Activated B cell treated with CpG ODN at 0.5 μM for 24 hours (primary cell): ENCODE measurements at regions of chr17 and their contacts with region 1.

Region 1: DNA sequence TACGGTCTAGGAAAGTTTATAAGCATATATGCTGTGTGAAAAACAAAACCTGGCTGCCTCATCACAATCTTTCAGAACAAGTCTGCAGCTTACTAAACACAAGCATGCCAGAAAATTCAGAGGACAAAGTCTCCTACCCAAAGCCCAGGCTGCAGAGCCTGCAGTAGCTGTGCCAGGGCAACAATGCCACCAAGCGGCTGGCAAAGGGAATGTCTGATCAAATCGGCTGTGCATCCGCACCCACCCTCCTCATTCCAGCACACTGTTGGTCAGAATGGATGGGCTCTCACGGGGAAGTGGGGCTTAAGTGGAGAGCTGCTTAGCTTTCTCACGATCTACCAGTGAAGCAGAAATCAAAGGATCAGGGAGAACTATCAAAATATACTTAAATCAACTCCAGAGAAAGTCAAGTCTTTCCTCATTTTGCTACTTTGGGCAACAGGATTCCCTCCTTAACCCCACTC is 73.5 kb downstream of the CYTH1 start:
- DNase-seq: no peak
- ATAC-seq: peak; percentile 55
- H3K4me3 Mint-ChIP-seq: peak overlapping the region; percentile 69
- H3K27ac Mint-ChIP-seq: peak overlapping the region; percentile 93
- H3K4me1 Mint-ChIP-seq: peaks cover 90% of the 10 kb centered on the region
- H3K27me3 Mint-ChIP-seq: no peaks in the 10 kb centered on the region
- CTCF ChIP-seq: no peak

Region 2: GRCh38 chr17:78497115-78497540 is 211.4 kb before region 1 on chr17:
- CTCF ChIA-PET with region 1: interaction called, 7 read pairs
- POLR2A ChIA-PET with region 1: interaction called, 4 read pairs
- intact Hi-C with region 1: loop called (anchors 1 kb)
- DNase-seq: peak; percentile 26
- ATAC-seq: peak; percentile 77
- H3K4me3 Mint-ChIP-seq: no peak overlapping the region
- H3K27ac Mint-ChIP-seq: no peak overlapping the region
- H3K4me1 Mint-ChIP-seq: no peaks in the 10 kb centered on the region
- H3K27me3 Mint-ChIP-seq: no peaks in the 10 kb centered on the region
- CTCF ChIP-seq: peak; percentile 19

Region 3: DNA sequence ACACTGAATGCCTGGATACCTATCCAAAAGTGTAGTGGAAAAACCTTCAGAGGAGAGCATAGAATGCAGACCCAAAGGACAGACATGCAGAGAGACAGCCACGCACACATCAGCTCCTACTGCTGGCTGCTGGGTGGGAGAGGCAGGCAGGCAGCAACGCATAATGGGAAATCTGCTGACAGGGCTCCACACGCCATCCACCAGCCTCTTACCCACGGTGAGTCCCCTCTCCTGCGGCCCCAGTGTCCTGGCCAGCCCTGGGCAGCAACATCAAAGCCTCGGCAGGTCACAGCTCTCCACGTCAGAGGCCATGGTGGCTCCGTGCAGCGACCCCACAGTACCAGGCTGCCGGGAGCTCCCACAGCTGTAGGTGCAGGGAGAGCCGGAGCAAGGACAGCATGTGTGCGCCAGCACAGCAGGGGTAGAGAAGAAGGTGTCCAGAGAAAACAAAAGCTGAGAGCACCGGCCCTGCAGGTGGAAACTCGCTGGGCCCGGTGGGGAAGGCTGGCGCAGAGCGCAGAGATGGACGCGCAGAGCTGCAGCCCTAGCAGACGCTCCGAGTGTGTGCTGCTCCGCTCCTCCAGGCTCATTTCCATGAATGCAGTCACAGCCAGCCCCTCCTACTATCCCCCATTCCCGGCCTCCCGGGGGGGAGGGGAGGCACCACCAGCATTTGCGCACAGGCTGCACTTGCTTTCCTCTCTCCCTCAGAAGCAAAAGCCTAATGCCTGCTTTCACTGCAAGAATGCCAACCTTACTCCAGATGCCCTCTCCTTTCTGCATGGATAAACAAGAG is 14.7 kb after region 1 on chr17:
- CTCF ChIA-PET with region 1: interaction called, 42 read pairs
- POLR2A ChIA-PET with region 1: interaction called, 75 read pairs
- intact Hi-C with region 1: loop called (anchors 1 kb)
- DNase-seq: no peak
- ATAC-seq: no peak
- H3K4me3 Mint-ChIP-seq: peak overlapping the region; percentile 77
- H3K27ac Mint-ChIP-seq: peak overlapping the region; percentile 91
- H3K4me1 Mint-ChIP-seq: peaks cover 99% of the 10 kb centered on the region
- H3K27me3 Mint-ChIP-seq: no peaks in the 10 kb centered on the region
- CTCF ChIP-seq: no peak

Region 4: DNA sequence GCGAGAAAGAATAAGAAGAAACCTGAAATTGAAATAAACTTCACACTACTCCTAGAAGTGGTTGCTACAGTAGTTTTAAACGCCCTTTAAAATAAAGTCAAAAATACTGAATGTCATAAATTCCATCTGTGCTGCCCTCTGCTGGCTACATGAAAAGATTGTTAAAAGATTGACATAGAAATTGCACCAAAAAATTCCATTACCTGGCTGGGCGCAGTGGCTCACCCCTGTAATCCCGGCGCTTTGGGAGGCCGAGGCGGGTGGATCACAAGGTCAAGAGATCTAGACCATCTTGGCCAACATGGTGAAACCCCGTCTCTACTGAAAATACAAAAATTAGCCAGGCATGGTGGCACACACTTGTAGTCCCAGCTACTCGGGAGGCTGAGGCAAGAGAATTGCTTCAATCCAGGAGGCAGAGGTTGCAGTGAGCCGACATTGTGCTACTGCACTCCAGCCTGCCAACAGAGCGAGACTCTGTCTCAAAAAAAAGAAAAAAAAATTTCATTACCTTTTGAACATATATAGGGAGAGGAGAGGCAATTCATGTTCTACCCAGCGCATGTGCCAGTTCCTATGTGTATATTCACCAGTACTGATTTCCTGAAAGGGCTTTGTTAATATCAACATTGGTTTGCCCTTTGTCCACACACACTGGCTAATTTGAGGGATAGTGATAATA is 37.0 kb after region 1 on chr17:
- CTCF ChIA-PET with region 1: interaction called, 15 read pairs
- POLR2A ChIA-PET with region 1: interaction called, 12 read pairs
- intact Hi-C with region 1: loop called (anchors 1 kb)
- DNase-seq: no peak
- ATAC-seq: no peak
- H3K4me3 Mint-ChIP-seq: peak overlapping the region; percentile 52
- H3K27ac Mint-ChIP-seq: peak overlapping the region; percentile 87
- H3K4me1 Mint-ChIP-seq: peaks cover 92% of the 10 kb centered on the region
- H3K27me3 Mint-ChIP-seq: no peaks in the 10 kb centered on the region
- CTCF ChIP-seq: peak; percentile 30

Region 5: GRCh38 chr17:78781948-78782916 is 73.7 kb after region 1 on chr17 and contains the start of gene CYTH1:
- CTCF ChIA-PET with region 1: interaction called, 3 read pairs
- POLR2A ChIA-PET with region 1: interaction called, 18 read pairs
- intact Hi-C with region 1: loop called (anchors 1 kb)
- DNase-seq: peak; percentile 98
- ATAC-seq: peak; percentile 80
- H3K4me3 Mint-ChIP-seq: peak within 1 kb of the TSS; percentile 92
- H3K27ac Mint-ChIP-seq: peak within 1 kb of the TSS; percentile 93
- H3K4me1 Mint-ChIP-seq: peaks cover 40% of the 10 kb centered on the region
- H3K27me3 Mint-ChIP-seq: no peaks in the 10 kb centered on the region
- CTCF ChIP-seq: no peak
- total RNA-seq, gene CYTH1: 368 and 391 TPM in 2 replicates

Region 6: GRCh38 chr17:78818932-78819331 is 110.4 kb after region 1 on chr17:
- CTCF ChIA-PET with region 1: no interaction called
- POLR2A ChIA-PET with region 1: no interaction called
- intact Hi-C with region 1: no loop called
- DNase-seq: no peak
- ATAC-seq: no peak
- H3K4me3 Mint-ChIP-seq: no peak overlapping the region
- H3K27ac Mint-ChIP-seq: peak overlapping the region; percentile 41
- H3K4me1 Mint-ChIP-seq: peaks cover 13% of the 10 kb centered on the region
- H3K27me3 Mint-ChIP-seq: no peaks in the 10 kb centered on the region
- CTCF ChIP-seq: no peak

Region 7: GRCh38 chr17:78840725-78841611 is 132.4 kb after region 1 on chr17 and contains the start of gene USP36:
- CTCF ChIA-PET with region 1: no interaction called
- POLR2A ChIA-PET with region 1: interaction called, 3 read pairs
- intact Hi-C with region 1: loop called (anchors 5 kb)
- DNase-seq: peak; percentile 99
- ATAC-seq: peak; percentile 85
- H3K4me3 Mint-ChIP-seq: peak within 1 kb of the TSS; percentile 93
- H3K27ac Mint-ChIP-seq: peak within 1 kb of the TSS; percentile 94
- H3K4me1 Mint-ChIP-seq: peaks cover 42% of the 10 kb centered on the region
- H3K27me3 Mint-ChIP-seq: no peaks in the 10 kb centered on the region
- CTCF ChIP-seq: no peak
- total RNA-seq, gene USP36: 93.8 and 107 TPM in 2 replicates

Region 8: DNA sequence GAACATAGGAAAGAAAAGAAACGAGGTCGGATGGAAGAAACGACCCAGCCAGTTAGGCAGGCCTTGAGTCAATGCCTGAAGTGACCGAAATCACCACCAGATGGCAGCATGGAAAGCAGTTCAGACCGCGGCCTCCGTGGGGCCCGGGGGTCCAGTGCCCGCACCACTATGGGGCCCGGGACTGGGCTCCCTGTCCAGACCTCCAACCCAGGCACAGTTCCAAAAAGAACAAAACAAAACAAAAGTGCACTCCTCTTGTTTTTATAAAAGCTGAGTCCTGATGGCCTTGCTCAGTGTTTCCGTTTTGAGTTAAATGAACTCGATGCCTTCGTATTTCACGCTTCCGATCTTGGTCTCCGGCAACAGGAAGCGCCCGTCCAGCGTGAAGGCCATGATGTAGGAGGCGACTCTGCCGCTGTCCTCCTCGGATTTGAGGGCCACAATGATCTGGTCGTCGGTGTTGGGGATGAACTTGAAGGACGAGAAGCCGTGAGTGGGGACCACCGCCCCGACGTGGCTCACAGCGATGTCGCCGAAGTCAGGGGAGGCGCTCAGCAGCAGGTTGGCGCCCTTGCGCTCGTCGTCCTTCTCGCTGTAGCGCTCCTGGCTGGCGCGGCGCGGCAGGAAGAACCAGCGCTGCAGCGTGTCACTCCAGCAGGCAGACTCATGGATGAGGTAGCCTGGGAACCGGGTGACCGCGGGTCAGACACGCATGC is 284.9 kb after region 1 on chr17:
- CTCF ChIA-PET with region 1: no interaction called
- POLR2A ChIA-PET with region 1: no interaction called
- intact Hi-C with region 1: no loop called
- DNase-seq: peak; percentile 40
- ATAC-seq: peak; percentile 77
- H3K4me3 Mint-ChIP-seq: no peak overlapping the region
- H3K27ac Mint-ChIP-seq: no peak overlapping the region
- H3K4me1 Mint-ChIP-seq: peaks cover 3% of the 10 kb centered on the region
- H3K27me3 Mint-ChIP-seq: no peaks in the 10 kb centered on the region
- CTCF ChIP-seq: peak; percentile 71